ENCODE measurements at regions of chr19 and their contacts with region 1.

Region 1: GRCh38 chr19:49127674-49128544 is 8.6 kb downstream of the PPFIA3 start:
- DNase-seq: peak; percentile 95
- ATAC-seq: peak; percentile 97
- H3K4me3 Mint-ChIP-seq: peak overlapping the region; percentile 83
- H3K27ac Mint-ChIP-seq: peak overlapping the region; percentile 87
- H3K4me1 Mint-ChIP-seq: peaks cover 15% of the 10 kb centered on the region
- H3K27me3 Mint-ChIP-seq: peaks cover 3% of the 10 kb centered on the region

Region 2: GRCh38 chr19:49113762-49114629 is 13.9 kb before region 1 on chr19 and contains the start of gene LIN7B:
- CTCF ChIA-PET with region 1: interaction called, 23 read pairs
- POLR2A ChIA-PET with region 1: interaction called, 3 read pairs
- DNase-seq: peak; percentile 76
- ATAC-seq: peak; percentile 77
- H3K4me3 Mint-ChIP-seq: peak within 1 kb of the TSS; percentile 80
- H3K27ac Mint-ChIP-seq: peak within 1 kb of the TSS; percentile 75
- H3K4me1 Mint-ChIP-seq: peaks cover 32% of the 10 kb centered on the region
- H3K27me3 Mint-ChIP-seq: no peaks in the 10 kb centered on the region
- total RNA-seq, gene LIN7B: 3.7 to 6.3 TPM